CD8-positive, alpha-beta T cell (primary cell): ENCODE measurements at regions of chr7 and their contacts with region 1.

Region 1: GRCh38 chr7:8295638-8296361 is 33.8 kb upstream of the ICA1 start:
- DNase-seq: peak in 6 of 9 experiments; percentile 7 to 81 (median 22)
- ATAC-seq: peak; percentile 78
- H3K4me3 ChIP-seq: no peak overlapping the region
- H3K4me3 Mint-ChIP-seq: no peak overlapping the region
- H3K27ac ChIP-seq: no peak overlapping the region
- H3K27ac Mint-ChIP-seq: no peak overlapping the region
- H3K4me1 ChIP-seq: no peaks in the 10 kb centered on the region
- H3K4me1 Mint-ChIP-seq: no peaks in the 10 kb centered on the region
- H3K27me3 ChIP-seq: no peaks in the 10 kb centered on the region
- H3K27me3 Mint-ChIP-seq: peaks cover 11% of the 10 kb centered on the region
- CTCF ChIP-seq: peak; percentile 67

Region 2: DNA sequence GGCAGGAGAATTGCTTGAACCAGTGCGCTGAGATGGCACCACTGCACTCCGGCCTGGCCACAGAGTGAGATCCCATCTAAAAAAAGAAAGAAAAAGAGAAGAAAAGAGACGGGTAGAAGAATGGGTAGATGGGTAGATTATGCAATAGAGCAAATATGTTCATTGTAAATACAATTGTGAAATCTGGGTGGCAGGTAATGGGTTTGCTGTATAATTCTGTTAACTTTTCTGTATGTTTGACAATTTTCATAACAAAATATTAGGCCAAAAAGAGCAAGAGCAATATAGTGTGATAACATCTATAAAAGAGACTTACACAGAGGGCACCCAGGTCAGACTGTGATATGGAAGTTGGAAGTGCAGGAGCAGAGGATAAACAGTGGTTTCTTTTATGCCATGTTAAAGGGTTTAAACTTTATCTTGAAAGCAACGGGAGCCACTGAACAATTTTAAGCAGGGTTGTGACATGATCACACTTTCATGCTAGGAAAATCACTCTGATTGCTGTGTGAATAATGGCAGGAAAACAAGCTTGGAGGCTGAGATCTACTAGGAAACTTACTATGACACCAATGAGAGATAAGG is 753.5 kb before region 1 on chr7:
- CTCF ChIA-PET with region 1: no interaction called
- POLR2A ChIA-PET with region 1: no interaction called
- intact Hi-C with region 1: loop called (anchors 5 kb)
- DNase-seq: no peak
- ATAC-seq: no peak
- H3K4me3 ChIP-seq: no peak overlapping the region
- H3K4me3 Mint-ChIP-seq: no peak overlapping the region
- H3K27ac ChIP-seq: no peak overlapping the region
- H3K27ac Mint-ChIP-seq: no peak overlapping the region
- H3K4me1 ChIP-seq: no peaks in the 10 kb centered on the region
- H3K4me1 Mint-ChIP-seq: peaks cover 2% of the 10 kb centered on the region
- H3K27me3 ChIP-seq: no peaks in the 10 kb centered on the region
- H3K27me3 Mint-ChIP-seq: peaks cover 2% of the 10 kb centered on the region
- CTCF ChIP-seq: no peak

Region 3: DNA sequence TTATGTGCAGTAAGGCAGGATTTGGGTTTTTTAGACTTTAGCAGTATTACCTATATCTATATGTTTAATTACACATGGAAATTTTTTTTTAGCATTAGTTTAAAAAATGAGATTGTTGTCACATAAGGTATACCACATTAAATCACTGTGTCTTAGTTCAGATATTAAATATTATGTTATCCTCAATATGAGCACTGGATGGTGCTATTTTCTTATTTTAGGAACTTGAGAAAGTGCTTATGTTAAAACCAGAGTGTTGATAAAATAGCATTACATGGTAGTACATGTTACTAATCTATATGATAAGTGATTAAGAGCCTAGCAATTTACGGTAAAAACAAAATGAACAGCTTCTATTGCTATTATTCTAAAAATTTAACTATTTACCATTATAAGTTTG is 700.3 kb before region 1 on chr7:
- CTCF ChIA-PET with region 1: interaction called, 4 read pairs
- POLR2A ChIA-PET with region 1: no interaction called
- intact Hi-C with region 1: loop called (anchors 1 to 2 kb)
- DNase-seq: peak in 2 of 9 experiments; percentile 39 to 57
- ATAC-seq: peak; percentile 52
- H3K4me3 ChIP-seq: no peak overlapping the region
- H3K4me3 Mint-ChIP-seq: no peak overlapping the region
- H3K27ac ChIP-seq: no peak overlapping the region
- H3K27ac Mint-ChIP-seq: no peak overlapping the region
- H3K4me1 ChIP-seq: no peaks in the 10 kb centered on the region
- H3K4me1 Mint-ChIP-seq: peaks cover 2% of the 10 kb centered on the region
- H3K27me3 ChIP-seq: no peaks in the 10 kb centered on the region
- H3K27me3 Mint-ChIP-seq: no peaks in the 10 kb centered on the region
- CTCF ChIP-seq: peak; percentile 69

Region 4: GRCh38 chr7:8305625-8306381 is 10.0 kb after region 1 on chr7:
- CTCF ChIA-PET with region 1: interaction called, 11 read pairs
- POLR2A ChIA-PET with region 1: no interaction called
- intact Hi-C with region 1: no loop called
- DNase-seq: no peak
- ATAC-seq: no peak
- H3K4me3 ChIP-seq: no peak overlapping the region
- H3K4me3 Mint-ChIP-seq: no peak overlapping the region
- H3K27ac ChIP-seq: no peak overlapping the region
- H3K27ac Mint-ChIP-seq: no peak overlapping the region
- H3K4me1 ChIP-seq: no peaks in the 10 kb centered on the region
- H3K4me1 Mint-ChIP-seq: no peaks in the 10 kb centered on the region
- H3K27me3 ChIP-seq: no peaks in the 10 kb centered on the region
- H3K27me3 Mint-ChIP-seq: peaks cover 11% of the 10 kb centered on the region
- CTCF ChIP-seq: no peak

Region 5: DNA sequence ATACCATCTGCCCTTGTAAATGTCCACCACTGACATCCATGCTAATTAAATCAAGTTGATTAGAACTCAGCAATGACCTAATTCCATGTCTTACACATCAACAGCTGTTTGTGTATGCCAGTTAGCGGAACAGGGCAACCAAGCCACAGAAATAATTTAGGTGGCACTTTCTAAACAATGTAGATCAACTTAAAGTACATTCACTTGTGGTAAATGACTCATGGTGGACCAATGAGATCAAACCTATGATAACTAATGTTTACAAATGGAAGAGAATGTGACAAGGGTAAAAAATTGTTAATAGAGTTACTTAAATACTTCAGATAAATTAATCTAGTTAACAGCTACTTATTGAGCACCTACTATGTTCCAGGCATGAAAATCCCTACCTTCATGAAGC is 29.3 kb after region 1 on chr7:
- CTCF ChIA-PET with region 1: no interaction called
- POLR2A ChIA-PET with region 1: no interaction called
- intact Hi-C with region 1: no loop called
- DNase-seq: no peak
- ATAC-seq: no peak
- H3K4me3 ChIP-seq: no peak overlapping the region
- H3K4me3 Mint-ChIP-seq: no peak overlapping the region
- H3K27ac ChIP-seq: no peak overlapping the region
- H3K27ac Mint-ChIP-seq: no peak overlapping the region
- H3K4me1 ChIP-seq: no peaks in the 10 kb centered on the region
- H3K4me1 Mint-ChIP-seq: no peaks in the 10 kb centered on the region
- H3K27me3 ChIP-seq: peaks cover 0 to 4% of the 10 kb centered on the region in 2 experiments
- H3K27me3 Mint-ChIP-seq: peaks cover 12% of the 10 kb centered on the region
- CTCF ChIP-seq: no peak

Region 6: DNA sequence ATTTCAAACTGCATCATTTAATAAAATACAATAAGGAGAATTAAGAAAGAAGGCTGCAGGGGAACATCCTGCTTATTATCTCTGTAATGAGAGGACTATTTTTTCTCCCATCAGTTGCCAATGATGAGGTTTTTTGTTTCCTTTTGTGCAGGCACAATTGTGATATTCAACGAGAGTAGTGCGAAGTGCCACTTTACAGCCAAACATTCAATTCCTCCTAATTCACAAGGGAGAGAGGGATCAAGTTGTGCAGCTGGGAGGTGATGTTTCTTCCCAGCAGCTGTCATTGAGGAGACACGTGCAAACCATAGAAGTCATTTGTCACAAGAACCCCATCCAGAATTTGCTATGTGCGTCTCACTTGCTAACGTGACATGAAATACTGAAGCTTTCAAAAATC is 47.8 kb after region 1 on chr7:
- CTCF ChIA-PET with region 1: no interaction called
- POLR2A ChIA-PET with region 1: no interaction called
- intact Hi-C with region 1: no loop called
- DNase-seq: no peak
- ATAC-seq: no peak
- H3K4me3 ChIP-seq: no peak overlapping the region
- H3K4me3 Mint-ChIP-seq: no peak overlapping the region
- H3K27ac ChIP-seq: no peak overlapping the region
- H3K27ac Mint-ChIP-seq: no peak overlapping the region
- H3K4me1 ChIP-seq: no peaks in the 10 kb centered on the region
- H3K4me1 Mint-ChIP-seq: no peaks in the 10 kb centered on the region
- H3K27me3 ChIP-seq: no peaks in the 10 kb centered on the region
- H3K27me3 Mint-ChIP-seq: peaks cover 12% of the 10 kb centered on the region
- CTCF ChIP-seq: no peak